CD8-positive, alpha-beta T cell (primary cell): ENCODE measurements at regions of chr10 and their contacts with region 1.

Region 1: GRCh38 chr10:124388823-124389612 is 29.7 kb downstream of the OAT start:
- DNase-seq: peak; percentile 86 to 97 (median 93)
- ATAC-seq: peak; percentile 99
- H3K4me3 ChIP-seq: peak overlapping the region; percentile 47 to 60
- H3K4me3 Mint-ChIP-seq: peak overlapping the region; percentile 66
- H3K27ac ChIP-seq: no peak overlapping the region
- H3K27ac Mint-ChIP-seq: no peak overlapping the region
- H3K4me1 ChIP-seq: peaks cover 10% of the 10 kb centered on the region
- H3K4me1 Mint-ChIP-seq: peaks cover 2% of the 10 kb centered on the region
- H3K27me3 ChIP-seq: no peaks in the 10 kb centered on the region
- H3K27me3 Mint-ChIP-seq: peaks cover 5% of the 10 kb centered on the region
- CTCF ChIP-seq: peak; percentile 90

Region 2: GRCh38 chr10:123573236-123574108 is 815.5 kb before region 1 on chr10:
- CTCF ChIA-PET with region 1: interaction called, 5 read pairs
- POLR2A ChIA-PET with region 1: no interaction called
- intact Hi-C with region 1: loop called in 1 of 2 experiments (anchors 1 kb)
- DNase-seq: peak in 5 of 9 experiments; percentile 11 to 47 (median 39)
- ATAC-seq: no peak
- H3K4me3 ChIP-seq: no peak overlapping the region
- H3K4me3 Mint-ChIP-seq: no peak overlapping the region
- H3K27ac ChIP-seq: no peak overlapping the region
- H3K27ac Mint-ChIP-seq: no peak overlapping the region
- H3K4me1 ChIP-seq: no peaks in the 10 kb centered on the region
- H3K4me1 Mint-ChIP-seq: no peaks in the 10 kb centered on the region
- H3K27me3 ChIP-seq: peaks cover 0 to 6% of the 10 kb centered on the region in 2 experiments
- H3K27me3 Mint-ChIP-seq: peaks cover 23% of the 10 kb centered on the region
- CTCF ChIP-seq: peak; percentile 35

Region 3: DNA sequence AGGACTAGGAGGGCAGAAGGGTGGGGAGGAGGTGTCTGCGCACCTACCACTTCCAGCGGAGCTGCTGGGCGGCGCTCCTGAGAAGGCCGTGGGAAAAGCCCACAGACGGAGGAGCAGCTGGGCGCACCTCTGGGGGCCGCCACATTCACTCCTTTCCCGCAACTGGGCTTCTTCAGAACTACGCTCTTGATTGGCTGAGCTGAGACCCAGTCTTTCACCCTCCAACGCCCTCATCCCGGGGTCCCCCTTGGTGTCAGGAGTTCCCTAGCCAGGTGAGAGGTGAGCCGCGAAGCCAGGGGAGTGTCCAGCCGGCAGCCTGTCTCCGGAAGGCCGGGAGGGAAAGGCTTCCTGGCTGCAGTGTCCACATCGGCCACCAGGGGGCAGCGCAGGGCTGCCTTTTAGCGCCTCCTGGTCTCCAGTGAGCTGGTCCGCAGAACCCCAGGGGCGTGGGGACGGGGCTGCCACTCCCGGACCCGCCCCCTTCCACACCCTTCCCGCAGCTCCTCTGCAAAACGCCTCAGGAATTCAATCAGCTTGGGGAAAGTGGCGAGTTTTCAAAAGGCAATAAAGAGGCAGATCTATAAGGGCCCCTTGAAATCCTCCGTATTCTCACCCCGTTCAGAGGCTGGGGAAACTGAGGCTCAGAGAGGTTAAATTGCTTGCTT is 394.5 kb before region 1 on chr10:
- CTCF ChIA-PET with region 1: interaction called, 198 read pairs
- POLR2A ChIA-PET with region 1: interaction called, 10 read pairs
- intact Hi-C with region 1: loop called in 1 of 2 experiments (anchors 1 kb)
- DNase-seq: peak; percentile 56 to 91 (median 77)
- ATAC-seq: peak; percentile 90
- H3K4me3 ChIP-seq: peak overlapping the region; percentile 10 to 39
- H3K4me3 Mint-ChIP-seq: peak overlapping the region; percentile 29
- H3K27ac ChIP-seq: no peak overlapping the region
- H3K27ac Mint-ChIP-seq: no peak overlapping the region
- H3K4me1 ChIP-seq: peaks cover 10% of the 10 kb centered on the region
- H3K4me1 Mint-ChIP-seq: peaks cover 25% of the 10 kb centered on the region
- H3K27me3 ChIP-seq: peaks cover 12 to 18% of the 10 kb centered on the region in 2 experiments
- H3K27me3 Mint-ChIP-seq: peaks cover 48% of the 10 kb centered on the region
- CTCF ChIP-seq: peak; percentile 95

Region 4: GRCh38 chr10:124025660-124026588 is 363.1 kb before region 1 on chr10:
- CTCF ChIA-PET with region 1: interaction called, 9 read pairs
- POLR2A ChIA-PET with region 1: no interaction called
- intact Hi-C with region 1: loop called in 1 of 2 experiments (anchors 1 kb)
- DNase-seq: peak in 1 of 9 experiments; percentile 22
- ATAC-seq: no peak
- H3K4me3 ChIP-seq: no peak overlapping the region
- H3K4me3 Mint-ChIP-seq: no peak overlapping the region
- H3K27ac ChIP-seq: no peak overlapping the region
- H3K27ac Mint-ChIP-seq: peak overlapping the region; percentile 22
- H3K4me1 ChIP-seq: no peaks in the 10 kb centered on the region
- H3K4me1 Mint-ChIP-seq: peaks cover 4% of the 10 kb centered on the region
- H3K27me3 ChIP-seq: no peaks in the 10 kb centered on the region
- H3K27me3 Mint-ChIP-seq: peaks cover 3% of the 10 kb centered on the region
- CTCF ChIP-seq: no peak

Region 5: DNA sequence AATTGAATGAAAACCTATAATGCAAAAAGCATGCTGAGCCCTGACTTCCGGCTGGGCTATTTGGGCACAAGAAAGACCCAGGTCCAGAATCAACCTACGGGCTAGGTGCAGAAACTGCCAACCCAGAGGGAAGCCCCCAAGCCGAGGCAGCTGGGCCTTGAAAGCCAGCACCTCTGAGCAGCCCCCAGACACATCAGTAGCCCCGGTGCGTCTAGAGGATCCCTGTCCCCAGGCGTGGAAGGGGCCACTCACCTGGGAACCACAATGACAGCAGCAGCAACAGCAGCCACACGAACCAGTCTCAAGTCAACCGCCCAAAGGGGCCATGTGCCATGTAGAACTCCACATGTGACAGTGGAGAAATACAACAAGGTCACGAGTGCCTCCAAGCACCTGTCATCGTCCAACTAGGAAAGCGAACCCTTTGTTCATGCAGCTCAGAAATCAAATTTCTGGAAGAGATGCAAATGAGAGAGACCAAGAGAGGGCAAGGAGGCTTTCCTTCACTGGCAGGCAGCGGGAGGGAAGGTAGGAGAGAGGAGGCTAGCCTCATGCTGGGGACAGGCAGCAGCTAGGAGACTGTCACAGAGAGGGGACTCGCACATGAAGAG is 238.1 kb before region 1 on chr10:
- CTCF ChIA-PET with region 1: no interaction called
- POLR2A ChIA-PET with region 1: no interaction called
- intact Hi-C with region 1: no loop called
- DNase-seq: no peak
- ATAC-seq: no peak
- H3K4me3 ChIP-seq: no peak overlapping the region
- H3K4me3 Mint-ChIP-seq: no peak overlapping the region
- H3K27ac ChIP-seq: no peak overlapping the region
- H3K27ac Mint-ChIP-seq: no peak overlapping the region
- H3K4me1 ChIP-seq: peaks cover 16% of the 10 kb centered on the region
- H3K4me1 Mint-ChIP-seq: peaks cover 3% of the 10 kb centered on the region
- H3K27me3 ChIP-seq: peaks cover 0 to 3% of the 10 kb centered on the region in 2 experiments
- H3K27me3 Mint-ChIP-seq: peaks cover 9% of the 10 kb centered on the region
- CTCF ChIP-seq: no peak

Region 6: DNA sequence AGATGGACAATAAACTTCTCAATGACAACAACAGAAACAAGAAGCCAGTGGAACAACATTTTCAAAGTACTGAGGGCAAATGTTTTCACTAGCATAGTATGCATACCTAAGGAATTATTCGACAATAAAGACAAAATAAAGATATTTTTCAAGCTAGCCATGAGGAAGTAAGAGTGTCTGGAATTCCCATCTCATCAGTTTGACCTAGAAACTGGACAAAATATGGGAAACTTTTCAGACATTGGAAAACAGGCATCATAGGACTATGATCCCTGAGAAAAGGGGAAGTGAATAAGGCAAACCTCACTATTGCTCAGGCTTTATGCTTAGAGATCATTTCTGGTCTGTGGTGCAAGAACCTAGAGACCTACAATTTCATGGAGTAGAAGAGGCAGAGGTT is 56.6 kb before region 1 on chr10:
- CTCF ChIA-PET with region 1: no interaction called
- POLR2A ChIA-PET with region 1: no interaction called
- intact Hi-C with region 1: no loop called
- DNase-seq: no peak
- ATAC-seq: no peak
- H3K4me3 ChIP-seq: no peak overlapping the region
- H3K4me3 Mint-ChIP-seq: no peak overlapping the region
- H3K27ac ChIP-seq: no peak overlapping the region
- H3K27ac Mint-ChIP-seq: no peak overlapping the region
- H3K4me1 ChIP-seq: no peaks in the 10 kb centered on the region
- H3K4me1 Mint-ChIP-seq: no peaks in the 10 kb centered on the region
- H3K27me3 ChIP-seq: no peaks in the 10 kb centered on the region
- H3K27me3 Mint-ChIP-seq: peaks cover 5% of the 10 kb centered on the region
- CTCF ChIP-seq: no peak

Region 7: GRCh38 chr10:124378881-124379471 is 10.0 kb before region 1 on chr10:
- CTCF ChIA-PET with region 1: interaction called, 22 read pairs
- POLR2A ChIA-PET with region 1: no interaction called
- intact Hi-C with region 1: no loop called
- DNase-seq: no peak
- ATAC-seq: no peak
- H3K4me3 ChIP-seq: no peak overlapping the region
- H3K4me3 Mint-ChIP-seq: no peak overlapping the region
- H3K27ac ChIP-seq: no peak overlapping the region
- H3K27ac Mint-ChIP-seq: no peak overlapping the region
- H3K4me1 ChIP-seq: no peaks in the 10 kb centered on the region
- H3K4me1 Mint-ChIP-seq: no peaks in the 10 kb centered on the region
- H3K27me3 ChIP-seq: peaks cover 3 to 8% of the 10 kb centered on the region in 2 experiments
- H3K27me3 Mint-ChIP-seq: peaks cover 43% of the 10 kb centered on the region
- CTCF ChIP-seq: no peak

Region 8: GRCh38 chr10:124418726-124419501 is 29.9 kb after region 1 on chr10 and contains the start of gene OAT:
- CTCF ChIA-PET with region 1: interaction called, 10 read pairs
- POLR2A ChIA-PET with region 1: no interaction called
- intact Hi-C with region 1: loop called in 1 of 2 experiments (anchors 1 kb)
- DNase-seq: peak; percentile 93 to 98 (median 97)
- ATAC-seq: peak; percentile 98
- H3K4me3 ChIP-seq: peak within 1 kb of the TSS; percentile 66 to 68
- H3K4me3 Mint-ChIP-seq: peak within 1 kb of the TSS; percentile 85
- H3K27ac ChIP-seq: peak within 1 kb of the TSS; percentile 70
- H3K27ac Mint-ChIP-seq: peak within 1 kb of the TSS; percentile 83
- H3K4me1 ChIP-seq: peaks cover 14% of the 10 kb centered on the region
- H3K4me1 Mint-ChIP-seq: peaks cover 25% of the 10 kb centered on the region
- H3K27me3 ChIP-seq: no peaks in the 10 kb centered on the region
- H3K27me3 Mint-ChIP-seq: peaks cover 7% of the 10 kb centered on the region
- CTCF ChIP-seq: no peak
- total RNA-seq, gene OAT: 49.8 to 56.1 TPM

Region 9: DNA sequence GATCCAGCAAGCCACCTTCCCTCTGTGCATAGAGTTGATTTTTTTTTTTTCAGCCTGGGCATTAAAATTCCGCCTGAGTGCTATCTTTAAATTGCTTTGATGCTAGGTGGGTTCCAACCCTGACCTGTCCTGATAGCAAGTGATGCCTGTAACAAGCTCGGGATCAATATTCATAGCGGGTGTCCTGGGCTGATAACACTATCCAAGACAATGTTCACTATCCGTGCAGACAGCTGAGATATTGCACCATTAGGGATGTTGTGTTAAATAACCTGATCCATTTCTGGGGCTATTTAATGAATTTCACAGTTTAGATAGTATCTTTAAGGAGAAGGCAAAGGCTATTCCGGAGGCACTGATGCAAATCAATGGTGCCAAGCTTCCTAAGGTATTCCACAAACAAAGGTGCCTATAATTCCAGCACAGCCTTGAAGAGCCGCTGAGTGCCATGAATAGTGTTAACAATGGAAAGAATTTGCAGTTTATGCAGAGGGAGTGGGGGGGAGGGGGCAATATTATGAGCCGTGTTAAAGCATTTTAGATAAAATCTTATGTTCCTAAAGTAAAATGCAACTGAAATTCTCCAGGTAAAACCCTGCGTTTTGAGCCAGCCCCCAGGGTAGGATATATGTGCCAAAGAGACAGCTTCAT is 65.1 kb after region 1 on chr10:
- CTCF ChIA-PET with region 1: no interaction called
- POLR2A ChIA-PET with region 1: no interaction called
- intact Hi-C with region 1: no loop called
- DNase-seq: no peak
- ATAC-seq: no peak
- H3K4me3 ChIP-seq: no peak overlapping the region
- H3K4me3 Mint-ChIP-seq: no peak overlapping the region
- H3K27ac ChIP-seq: no peak overlapping the region
- H3K27ac Mint-ChIP-seq: no peak overlapping the region
- H3K4me1 ChIP-seq: peaks cover 12% of the 10 kb centered on the region
- H3K4me1 Mint-ChIP-seq: peaks cover 7% of the 10 kb centered on the region
- H3K27me3 ChIP-seq: peaks cover 16 to 21% of the 10 kb centered on the region in 2 experiments
- H3K27me3 Mint-ChIP-seq: peaks cover 61% of the 10 kb centered on the region
- CTCF ChIP-seq: no peak

Region 10: GRCh38 chr10:125719146-125720001 is 1330.4 kb after region 1 on chr10 and contains the start of gene EDRF1:
- CTCF ChIA-PET with region 1: no interaction called
- POLR2A ChIA-PET with region 1: no interaction called
- intact Hi-C with region 1: loop called in 1 of 2 experiments (anchors 5 kb)
- DNase-seq: peak; percentile 98 to 100 (median 99)
- ATAC-seq: peak; percentile 94
- H3K4me3 ChIP-seq: peak within 1 kb of the TSS; percentile 78 to 93
- H3K4me3 Mint-ChIP-seq: peak within 1 kb of the TSS; percentile 99
- H3K27ac ChIP-seq: peak within 1 kb of the TSS; percentile 91 to 94
- H3K27ac Mint-ChIP-seq: peak within 1 kb of the TSS; percentile 99
- H3K4me1 ChIP-seq: peaks cover 39% of the 10 kb centered on the region
- H3K4me1 Mint-ChIP-seq: peaks cover 36% of the 10 kb centered on the region
- H3K27me3 ChIP-seq: no peaks in the 10 kb centered on the region
- H3K27me3 Mint-ChIP-seq: no peaks in the 10 kb centered on the region
- CTCF ChIP-seq: no peak
- total RNA-seq, gene EDRF1: 46.9 to 49.0 TPM